HEK293T (cell line): ENCODE measurements at regions of chr12 and their contacts with region 1.

Region 1: GRCh38 chr12:21501379-21501956 is at the starts of genes GOLT1B and RECQL:
- DNase-seq: peak; percentile 94

Region 2: DNA sequence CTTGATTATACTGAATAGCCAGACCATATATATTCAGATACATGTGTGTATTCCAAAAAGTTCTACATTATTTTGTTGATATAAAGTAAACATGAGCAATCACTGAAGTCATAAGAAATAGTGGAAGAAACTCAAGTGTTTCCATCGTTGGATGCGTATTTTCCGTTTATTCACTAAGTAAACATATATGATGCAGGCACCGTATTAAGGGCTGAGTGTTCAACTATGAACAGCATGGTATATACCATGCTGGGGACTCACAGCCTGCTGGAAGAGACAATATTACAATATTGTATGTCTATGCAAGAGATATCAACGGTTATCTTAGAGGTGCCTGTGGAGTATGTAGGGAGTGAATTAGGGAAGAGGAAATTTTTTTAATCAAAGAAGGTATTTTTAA is 62.8 kb before region 1 on chr12:
- CTCF ChIA-PET with region 1: no interaction called
- POLR2A ChIA-PET with region 1: interaction called, 12 read pairs
- DNase-seq: no peak

Region 3: DNA sequence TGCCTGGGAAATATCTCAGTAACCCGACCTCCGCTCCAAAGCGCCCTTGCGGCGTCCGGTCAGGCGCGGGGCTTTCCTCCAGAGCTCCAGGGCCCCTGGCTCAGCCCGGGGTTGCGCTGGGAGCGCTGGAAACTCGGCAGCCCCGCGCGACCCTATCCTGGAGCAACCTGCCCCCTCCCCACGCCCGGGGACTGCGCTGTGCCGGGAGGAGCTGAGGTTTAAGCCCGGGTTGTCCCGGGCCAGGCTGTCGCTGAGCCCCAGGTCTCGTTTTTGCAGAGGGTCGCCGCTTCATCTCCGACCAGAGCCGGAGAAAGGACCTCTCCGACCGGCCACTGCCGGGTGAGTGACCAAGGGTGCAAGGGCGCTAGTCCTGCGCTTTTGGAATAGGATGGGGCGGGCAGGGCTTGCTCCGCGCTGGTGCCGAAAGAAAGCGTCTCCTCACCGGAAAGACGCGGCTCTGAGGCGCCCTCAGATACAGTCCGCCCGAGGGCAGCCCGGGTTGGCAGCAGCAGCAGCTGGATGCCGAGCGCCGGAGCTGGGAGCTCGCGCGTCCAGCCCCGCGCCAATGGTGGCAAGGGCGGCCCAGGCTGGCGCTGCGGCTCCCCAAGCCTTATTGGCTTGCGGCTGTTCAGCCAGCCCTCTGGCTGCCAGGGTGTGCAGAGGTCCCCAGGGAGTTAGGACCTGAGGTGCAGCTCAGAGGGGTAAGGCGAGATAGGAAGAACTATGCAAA is 26.1 kb after region 1 on chr12:
- CTCF ChIA-PET with region 1: no interaction called
- POLR2A ChIA-PET with region 1: interaction called, 28 read pairs
- DNase-seq: peak; percentile 60

Region 4: GRCh38 chr12:21583587-21583986 is 82.1 kb after region 1 on chr12:
- CTCF ChIA-PET with region 1: no interaction called
- POLR2A ChIA-PET with region 1: no interaction called
- DNase-seq: no peak

Region 5: DNA sequence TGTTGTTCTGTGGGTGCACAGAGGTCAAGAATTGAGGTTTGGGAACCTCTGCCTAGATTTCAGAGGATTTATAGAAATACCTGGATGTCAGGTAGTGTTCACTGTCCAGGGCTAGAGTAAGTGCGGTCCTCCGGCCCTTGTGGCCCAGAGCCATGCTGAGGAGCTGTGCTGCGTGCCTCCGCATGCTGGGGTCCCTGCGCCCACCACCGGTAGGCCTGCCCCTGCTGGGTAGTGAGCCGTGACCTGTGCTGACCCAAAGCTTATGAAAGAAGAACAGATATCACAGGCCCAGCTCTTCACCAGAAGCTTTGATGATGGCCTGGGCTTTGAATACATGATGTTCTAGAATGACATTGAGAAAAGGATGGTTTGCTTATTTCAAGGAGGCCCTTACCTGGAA is 506.7 kb after region 1 on chr12:
- CTCF ChIA-PET with region 1: no interaction called
- POLR2A ChIA-PET with region 1: no interaction called
- DNase-seq: no peak